ENCODE measurements at regions of chr19 and their contacts with region 1.

Region 1: GRCh38 chr19:28466107-28467045 is 746.6 kb downstream of the UQCRFS1 start:
- DNase-seq: peak; percentile 62 to 72
- H3K4me3 ChIP-seq: no peak overlapping the region
- H3K27ac ChIP-seq: no peak overlapping the region
- H3K4me1 ChIP-seq: peaks cover 0 to 7% of the 10 kb centered on the region in 2 donors
- H3K27me3 ChIP-seq: no peaks in the 10 kb centered on the region
- CTCF ChIP-seq: peak; percentile 28 to 75 (median 56)
- POLR2A ChIP-seq: no peak

Region 2: GRCh38 chr19:28530406-28531035 is 64.1 kb after region 1 on chr19:
- intact Hi-C with region 1: no loop called
- DNase-seq: no peak
- H3K4me3 ChIP-seq: no peak overlapping the region
- H3K27ac ChIP-seq: no peak overlapping the region
- H3K4me1 ChIP-seq: no peaks in the 10 kb centered on the region
- H3K27me3 ChIP-seq: no peaks in the 10 kb centered on the region
- CTCF ChIP-seq: no peak
- POLR2A ChIP-seq: no peak

Region 3: GRCh38 chr19:28577233-28577632 is 110.9 kb after region 1 on chr19:
- intact Hi-C with region 1: no loop called
- DNase-seq: no peak
- H3K4me3 ChIP-seq: no peak overlapping the region
- H3K27ac ChIP-seq: no peak overlapping the region
- H3K4me1 ChIP-seq: no peaks in the 10 kb centered on the region
- H3K27me3 ChIP-seq: no peaks in the 10 kb centered on the region
- CTCF ChIP-seq: no peak
- POLR2A ChIP-seq: no peak

Region 4: GRCh38 chr19:28710278-28710677 is 243.9 kb after region 1 on chr19:
- intact Hi-C with region 1: loop called (anchors 10 kb)
- DNase-seq: no peak
- H3K4me3 ChIP-seq: no peak overlapping the region
- H3K27ac ChIP-seq: no peak overlapping the region
- H3K4me1 ChIP-seq: no peaks in the 10 kb centered on the region
- H3K27me3 ChIP-seq: no peaks in the 10 kb centered on the region
- CTCF ChIP-seq: peak; percentile 36 to 73 (median 62)
- POLR2A ChIP-seq: no peak

Region 5: DNA sequence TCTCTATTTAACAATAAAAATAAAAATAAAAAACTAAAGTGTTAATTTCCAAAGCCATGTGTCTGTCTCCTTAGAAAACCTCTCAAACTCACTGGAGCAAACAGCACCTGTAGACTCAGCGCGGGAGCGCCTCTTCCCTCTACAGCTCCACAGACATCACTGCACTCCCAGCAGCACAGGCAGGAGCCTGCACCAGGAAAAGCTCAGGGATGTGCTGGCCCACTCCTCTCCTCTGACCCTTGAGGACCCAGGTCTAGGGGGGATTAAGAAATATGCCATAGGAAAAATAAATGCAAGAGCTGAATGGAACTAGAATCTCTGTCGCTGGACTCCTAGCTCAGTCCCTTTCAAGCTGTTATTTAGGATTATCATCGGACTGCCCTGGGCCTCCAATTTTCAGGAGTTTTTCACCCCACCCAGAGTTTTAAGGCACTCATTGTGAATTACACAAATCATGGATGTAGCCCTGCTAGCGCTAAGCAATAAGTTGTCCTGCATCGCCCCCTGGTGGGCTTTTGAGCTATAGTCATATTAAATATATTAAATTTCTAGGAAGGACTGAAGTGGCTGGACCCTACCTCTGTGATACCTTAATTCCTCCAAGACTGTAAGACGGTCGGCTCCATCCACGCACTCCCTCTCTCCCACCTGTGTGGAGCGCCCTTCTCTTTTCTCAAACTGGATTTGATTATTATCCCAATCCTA is 412.6 kb after region 1 on chr19:
- intact Hi-C with region 1: loop called (anchors 10 kb)
- DNase-seq: peak; percentile 69 to 77
- H3K4me3 ChIP-seq: no peak overlapping the region
- H3K27ac ChIP-seq: no peak overlapping the region
- H3K4me1 ChIP-seq: peaks cover 6 to 18% of the 10 kb centered on the region in 2 donors
- H3K27me3 ChIP-seq: no peaks in the 10 kb centered on the region
- CTCF ChIP-seq: peak; percentile 38 to 75 (median 61)
- POLR2A ChIP-seq: no peak